ENCODE measurements at regions of chr12 and their contacts with region 1.

Region 1: DNA sequence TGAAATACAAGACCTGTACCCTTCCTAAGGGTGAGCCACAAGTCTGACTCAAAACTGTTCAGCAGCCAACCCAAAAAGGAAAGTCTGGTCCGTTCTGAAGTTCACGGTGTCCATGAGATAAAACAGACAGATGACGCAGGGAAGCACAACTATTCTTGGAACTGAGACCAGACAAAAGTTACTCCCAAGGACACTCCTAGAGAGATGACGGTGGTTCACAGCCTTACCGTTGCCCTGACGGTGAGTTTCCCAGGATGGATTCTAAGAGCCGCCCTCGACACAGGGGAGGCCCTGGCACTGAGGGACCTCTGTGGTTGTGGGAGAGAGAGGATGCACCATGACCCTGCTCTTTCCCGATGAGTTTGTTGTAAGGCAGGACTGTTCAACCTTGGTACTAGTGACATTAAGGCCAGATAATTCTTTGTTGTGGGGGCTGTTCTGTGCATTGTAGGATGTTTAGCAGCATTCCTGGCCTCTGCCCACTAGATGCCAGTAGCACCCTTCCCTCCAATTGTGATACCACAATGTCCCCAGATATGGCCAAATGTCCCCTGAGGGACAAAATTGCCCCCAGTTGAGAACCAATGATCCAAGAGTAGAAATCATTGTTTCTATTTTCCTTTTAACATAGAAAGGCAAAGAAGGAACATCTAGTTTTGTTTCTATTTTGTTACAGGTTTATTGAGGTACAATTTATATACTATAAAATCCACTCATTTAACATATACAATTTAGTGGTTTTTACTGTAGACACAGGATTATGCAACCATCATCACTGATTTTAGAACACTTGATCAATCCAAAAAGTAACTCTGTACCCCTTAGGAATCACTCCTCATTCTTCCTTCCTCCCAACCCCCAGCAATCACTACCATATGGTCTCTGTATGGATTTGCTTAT is 23.0 kb downstream of the OR10P1 start:
- DNase-seq: no peak
- ATAC-seq: no peak
- H3K4me3 ChIP-seq: no peak overlapping the region
- H3K4me3 Mint-ChIP-seq: no peak overlapping the region
- H3K27ac ChIP-seq: no peak overlapping the region
- H3K27ac Mint-ChIP-seq: no peak overlapping the region
- H3K4me1 ChIP-seq: no peaks in the 10 kb centered on the region
- H3K4me1 Mint-ChIP-seq: peaks cover 0 to 4% (median 2%) of the 10 kb centered on the region in 7 donors
- H3K27me3 ChIP-seq: no peaks in the 10 kb centered on the region
- H3K27me3 Mint-ChIP-seq: peaks cover 0 to 35% (median 0%) of the 10 kb centered on the region in 5 donors

Region 2: GRCh38 chr12:55188974-55189556 is 470.7 kb before region 1 on chr12:
- CTCF ChIA-PET with region 1: no interaction called
- POLR2A ChIA-PET with region 1: no interaction called
- intact Hi-C with region 1: loop called (anchors 1 kb)
- DNase-seq: peak in 7 of 9 donors; percentile 29 to 66 (median 56)
- ATAC-seq: peak; percentile 79
- H3K4me3 ChIP-seq: no peak overlapping the region
- H3K4me3 Mint-ChIP-seq: no peak overlapping the region
- H3K27ac ChIP-seq: no peak overlapping the region
- H3K27ac Mint-ChIP-seq: no peak overlapping the region
- H3K4me1 ChIP-seq: no peaks in the 10 kb centered on the region
- H3K4me1 Mint-ChIP-seq: no peaks in the 10 kb centered on the region
- H3K27me3 ChIP-seq: no peaks in the 10 kb centered on the region
- H3K27me3 Mint-ChIP-seq: peaks cover 19 to 63% (median 46%) of the 10 kb centered on the region in 5 donors

Region 3: DNA sequence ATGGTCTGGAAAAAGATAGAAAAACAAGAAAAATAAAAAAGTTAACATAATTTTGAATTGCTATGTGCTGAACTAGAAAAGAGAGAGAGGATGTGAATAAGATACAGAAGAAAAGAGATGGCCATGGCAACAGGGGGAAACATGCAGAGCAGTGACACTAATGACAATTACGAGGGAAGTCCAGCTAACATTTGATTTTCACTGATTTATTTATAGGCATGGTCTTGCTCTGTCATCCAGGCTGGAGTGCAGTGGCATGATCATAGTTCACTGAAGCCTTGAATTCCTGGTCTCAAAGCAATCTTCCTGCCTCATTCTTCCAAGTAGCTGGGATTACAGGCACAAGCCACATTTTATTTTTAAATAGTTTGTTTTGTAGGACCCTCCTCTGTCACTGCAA is 413.6 kb before region 1 on chr12:
- CTCF ChIA-PET with region 1: no interaction called
- POLR2A ChIA-PET with region 1: no interaction called
- intact Hi-C with region 1: no loop called
- DNase-seq: no peak
- ATAC-seq: no peak
- H3K4me3 ChIP-seq: no peak overlapping the region
- H3K4me3 Mint-ChIP-seq: no peak overlapping the region
- H3K27ac ChIP-seq: no peak overlapping the region
- H3K27ac Mint-ChIP-seq: no peak overlapping the region
- H3K4me1 ChIP-seq: no peaks in the 10 kb centered on the region
- H3K4me1 Mint-ChIP-seq: no peaks in the 10 kb centered on the region
- H3K27me3 ChIP-seq: peaks cover 0 to 3% of the 10 kb centered on the region in 2 donors
- H3K27me3 Mint-ChIP-seq: peaks cover 18 to 34% (median 33%) of the 10 kb centered on the region in 5 donors

Region 4: DNA sequence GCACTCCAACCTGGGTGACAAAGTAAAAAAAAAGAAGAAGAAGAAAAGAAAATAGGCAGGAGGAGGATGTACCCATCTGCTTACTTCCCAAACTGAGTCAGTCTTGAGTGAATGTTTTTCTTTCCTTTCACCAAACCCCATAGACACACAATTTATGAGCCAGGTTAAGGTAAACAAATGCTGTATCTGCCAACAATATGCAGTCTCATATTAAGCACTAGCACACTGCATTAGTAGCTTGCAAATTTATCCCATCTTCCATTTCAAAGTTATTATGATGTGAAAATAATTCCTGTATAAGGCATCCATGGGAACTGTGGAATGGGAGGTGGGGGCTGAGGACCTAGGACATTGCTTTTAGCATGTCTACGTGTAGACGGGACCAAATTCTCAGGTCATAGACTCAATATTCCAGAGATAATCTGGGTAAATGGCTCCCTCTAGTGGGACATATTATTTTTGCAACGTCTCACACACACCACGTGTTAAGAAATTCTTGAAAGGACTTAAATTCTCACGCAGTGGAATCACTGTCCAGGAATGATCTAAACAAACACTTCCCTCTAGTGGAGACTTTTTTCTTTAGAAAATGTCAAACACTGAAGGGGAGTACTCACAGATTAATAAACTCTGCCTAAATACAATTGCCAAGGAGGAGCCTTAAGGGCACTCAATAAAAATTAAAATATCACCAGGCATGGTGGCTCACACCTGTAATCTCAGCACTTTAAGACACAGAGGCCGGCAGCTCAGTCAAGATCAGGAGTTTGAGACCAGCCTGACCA is 40.2 kb before region 1 on chr12:
- CTCF ChIA-PET with region 1: interaction called, 3 read pairs
- POLR2A ChIA-PET with region 1: no interaction called
- intact Hi-C with region 1: loop called (anchors 1 kb)
- DNase-seq: peak in 7 of 9 donors; percentile 49 to 74 (median 69)
- ATAC-seq: peak; percentile 95
- H3K4me3 ChIP-seq: no peak overlapping the region
- H3K4me3 Mint-ChIP-seq: no peak overlapping the region
- H3K27ac ChIP-seq: no peak overlapping the region
- H3K27ac Mint-ChIP-seq: no peak overlapping the region
- H3K4me1 ChIP-seq: no peaks in the 10 kb centered on the region
- H3K4me1 Mint-ChIP-seq: peaks cover 0 to 6% (median 0%) of the 10 kb centered on the region in 7 donors
- H3K27me3 ChIP-seq: no peaks in the 10 kb centered on the region
- H3K27me3 Mint-ChIP-seq: peaks cover 19 to 46% (median 36%) of the 10 kb centered on the region in 5 donors

Measured in naive thymus-derived CD4-positive, alpha-beta T cell (primary cell).